G401 (cell line): ENCODE measurements at regions of chr19 and their contacts with region 1.

Region 1: GRCh38 chr19:3852614-3853254 is 16.1 kb downstream of the ZFR2 start:
- DNase-seq: no peak

Region 2: DNA sequence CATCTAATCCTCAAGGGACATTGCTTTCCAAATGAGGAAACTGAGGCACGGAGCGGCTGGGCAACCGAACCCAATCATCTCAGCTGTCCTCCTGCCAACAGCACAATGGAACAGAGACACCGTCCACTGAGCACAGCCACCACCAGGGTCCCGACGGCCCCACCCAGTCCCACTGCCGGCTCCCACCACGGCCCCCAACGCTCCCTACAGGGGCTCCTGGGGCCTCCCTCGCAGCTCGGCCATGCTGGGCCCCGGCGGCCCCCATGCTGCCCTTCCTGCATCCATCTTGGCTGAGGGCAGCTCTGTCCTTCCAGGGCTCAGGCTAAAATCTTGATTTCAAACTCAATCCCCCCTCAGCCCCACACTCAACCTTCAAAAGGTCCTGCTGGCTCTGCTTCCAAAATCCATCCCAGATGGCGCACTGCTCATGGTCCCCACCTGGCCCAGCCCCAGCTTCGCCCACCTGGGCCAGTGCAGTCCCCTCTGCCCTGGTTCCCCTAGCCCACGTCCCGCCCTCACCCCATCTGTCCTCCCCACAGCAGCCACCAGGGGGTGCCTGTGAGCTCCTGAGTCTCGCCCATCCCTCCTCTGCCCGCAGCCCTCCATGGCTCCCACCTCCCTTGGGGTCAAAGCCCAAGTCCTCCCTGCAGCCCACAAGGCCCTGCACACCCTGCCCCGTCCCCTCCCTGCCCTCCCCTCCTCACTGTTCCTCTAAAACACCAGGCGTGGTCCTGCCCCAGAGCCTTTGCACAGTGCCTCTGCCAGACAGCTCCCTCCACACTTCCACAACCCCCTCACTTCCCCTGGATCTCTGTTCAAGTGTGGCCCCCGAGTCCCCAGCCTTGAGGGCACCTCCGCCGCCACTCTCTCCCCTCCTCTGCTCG is 160.4 kb before region 1 on chr19:
- in situ Hi-C with region 1: no loop called
- DNase-seq: no peak

Region 3: GRCh38 chr19:4208385-4209094 is 355.8 kb after region 1 on chr19:
- in situ Hi-C with region 1: loop called (anchors 25 kb)
- DNase-seq: no peak